ENCODE measurements at regions of chr2 and their contacts with region 1.

Region 1: GRCh38 chr2:104982111-104982510 is 55.8 kb upstream of the MRPS9 start:
- DNase-seq: no peak
- H3K4me3 ChIP-seq: no peak overlapping the region
- H3K27ac ChIP-seq: no peak overlapping the region
- H3K4me1 ChIP-seq: no peaks in the 10 kb centered on the region
- H3K27me3 ChIP-seq: no peaks in the 10 kb centered on the region
- CTCF ChIP-seq: no peak

Region 2: GRCh38 chr2:104825124-104825865 is 156.8 kb before region 1 on chr2:
- CTCF ChIA-PET with region 1: interaction called, 26 read pairs
- dilution Hi-C with region 1: no loop called
- in situ Hi-C with region 1: no loop called
- intact Hi-C with region 1: no loop called
- DNase-seq: no peak
- H3K4me3 ChIP-seq: no peak overlapping the region
- H3K27ac ChIP-seq: no peak overlapping the region
- H3K4me1 ChIP-seq: no peaks in the 10 kb centered on the region
- H3K27me3 ChIP-seq: no peaks in the 10 kb centered on the region
- CTCF ChIP-seq: no peak